ENCODE measurements at regions of chr1 and their contacts with region 1.

Region 1: DNA sequence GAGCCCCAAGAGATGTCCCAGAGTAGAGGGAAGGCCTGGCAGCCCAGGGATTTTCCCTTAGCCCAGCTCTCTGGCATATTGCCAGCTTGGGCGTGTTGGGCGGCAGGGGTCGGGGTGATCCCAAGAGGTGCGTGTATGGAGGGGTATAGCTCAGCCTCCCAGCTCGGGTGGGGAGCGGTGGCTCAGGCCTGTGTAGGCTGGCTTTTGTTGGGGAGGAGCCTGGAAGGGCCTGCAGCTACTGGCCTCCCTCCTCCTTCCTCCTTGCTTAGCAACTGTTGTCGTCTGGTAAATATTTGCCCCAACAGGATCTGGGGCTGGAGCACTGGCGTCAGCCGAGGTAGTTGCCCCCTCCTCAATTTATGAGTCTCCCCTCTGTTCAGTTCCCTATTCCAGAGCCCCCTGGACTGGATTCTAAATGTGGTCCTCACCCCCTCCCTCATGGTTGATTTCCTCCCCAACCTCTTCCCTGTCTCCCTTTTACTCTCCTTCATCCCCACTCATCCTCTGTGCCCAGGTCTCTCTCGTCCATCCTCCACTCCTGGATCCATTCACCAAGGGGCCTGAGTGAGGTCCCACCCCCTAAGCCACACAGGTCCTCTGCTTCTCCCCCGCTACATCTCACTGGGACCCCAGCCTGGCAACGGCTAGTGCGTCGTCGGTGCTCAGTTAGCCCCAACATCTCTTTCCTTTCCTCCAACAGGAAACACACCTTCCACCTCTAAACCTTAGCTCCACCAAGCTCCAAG is 10.3 kb upstream of the LMNA start:
- DNase-seq: peak; percentile 44
- ATAC-seq: peak; percentile 5
- H3K4me3 Mint-ChIP-seq: no peak overlapping the region
- H3K27ac Mint-ChIP-seq: peak overlapping the region; percentile 62
- H3K4me1 Mint-ChIP-seq: peaks cover 60% of the 10 kb centered on the region
- H3K27me3 Mint-ChIP-seq: no peaks in the 10 kb centered on the region
- CTCF ChIP-seq: no peak

Region 2: GRCh38 chr1:155829386-155829785 is 274.9 kb before region 1 on chr1:
- CTCF ChIA-PET with region 1: no interaction called
- POLR2A ChIA-PET with region 1: no interaction called
- DNase-seq: no peak
- ATAC-seq: no peak
- H3K4me3 Mint-ChIP-seq: no peak overlapping the region
- H3K27ac Mint-ChIP-seq: no peak overlapping the region
- H3K4me1 Mint-ChIP-seq: peaks cover 7% of the 10 kb centered on the region
- H3K27me3 Mint-ChIP-seq: no peaks in the 10 kb centered on the region
- CTCF ChIP-seq: no peak

Region 3: DNA sequence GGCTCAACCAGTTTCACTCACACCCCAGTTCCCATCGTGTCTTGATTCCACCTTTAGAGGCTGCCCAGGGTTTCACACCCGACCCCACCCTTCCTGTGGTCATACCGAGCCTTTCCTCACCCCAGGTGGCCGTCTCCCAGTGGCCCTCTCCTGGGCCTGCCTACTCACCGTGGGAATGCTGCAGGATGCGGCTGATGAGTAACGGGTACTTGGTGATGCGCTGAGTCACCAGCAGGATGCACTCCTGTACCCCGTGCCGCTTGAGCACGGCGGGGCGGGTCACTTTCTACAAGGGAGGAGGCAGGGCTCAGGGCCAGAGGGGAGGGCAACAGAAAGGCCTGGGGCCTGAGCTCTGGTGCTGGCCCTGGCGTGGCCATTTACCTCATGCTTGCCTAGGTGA is 142.3 kb before region 1 on chr1:
- CTCF ChIA-PET with region 1: no interaction called
- POLR2A ChIA-PET with region 1: no interaction called
- DNase-seq: no peak
- ATAC-seq: peak; percentile 63
- H3K4me3 Mint-ChIP-seq: no peak overlapping the region
- H3K27ac Mint-ChIP-seq: peak overlapping the region; percentile 82
- H3K4me1 Mint-ChIP-seq: peaks cover 6% of the 10 kb centered on the region
- H3K27me3 Mint-ChIP-seq: no peaks in the 10 kb centered on the region
- CTCF ChIP-seq: no peak

Region 4: GRCh38 chr1:156050416-156050815 is 53.8 kb before region 1 on chr1:
- CTCF ChIA-PET with region 1: no interaction called
- POLR2A ChIA-PET with region 1: no interaction called
- DNase-seq: no peak
- ATAC-seq: no peak
- H3K4me3 Mint-ChIP-seq: no peak overlapping the region
- H3K27ac Mint-ChIP-seq: no peak overlapping the region; the same call in 1 of the 2 replicates
- H3K4me1 Mint-ChIP-seq: peaks cover 8% of the 10 kb centered on the region
- H3K27me3 Mint-ChIP-seq: no peaks in the 10 kb centered on the region
- CTCF ChIP-seq: no peak

Region 5: DNA sequence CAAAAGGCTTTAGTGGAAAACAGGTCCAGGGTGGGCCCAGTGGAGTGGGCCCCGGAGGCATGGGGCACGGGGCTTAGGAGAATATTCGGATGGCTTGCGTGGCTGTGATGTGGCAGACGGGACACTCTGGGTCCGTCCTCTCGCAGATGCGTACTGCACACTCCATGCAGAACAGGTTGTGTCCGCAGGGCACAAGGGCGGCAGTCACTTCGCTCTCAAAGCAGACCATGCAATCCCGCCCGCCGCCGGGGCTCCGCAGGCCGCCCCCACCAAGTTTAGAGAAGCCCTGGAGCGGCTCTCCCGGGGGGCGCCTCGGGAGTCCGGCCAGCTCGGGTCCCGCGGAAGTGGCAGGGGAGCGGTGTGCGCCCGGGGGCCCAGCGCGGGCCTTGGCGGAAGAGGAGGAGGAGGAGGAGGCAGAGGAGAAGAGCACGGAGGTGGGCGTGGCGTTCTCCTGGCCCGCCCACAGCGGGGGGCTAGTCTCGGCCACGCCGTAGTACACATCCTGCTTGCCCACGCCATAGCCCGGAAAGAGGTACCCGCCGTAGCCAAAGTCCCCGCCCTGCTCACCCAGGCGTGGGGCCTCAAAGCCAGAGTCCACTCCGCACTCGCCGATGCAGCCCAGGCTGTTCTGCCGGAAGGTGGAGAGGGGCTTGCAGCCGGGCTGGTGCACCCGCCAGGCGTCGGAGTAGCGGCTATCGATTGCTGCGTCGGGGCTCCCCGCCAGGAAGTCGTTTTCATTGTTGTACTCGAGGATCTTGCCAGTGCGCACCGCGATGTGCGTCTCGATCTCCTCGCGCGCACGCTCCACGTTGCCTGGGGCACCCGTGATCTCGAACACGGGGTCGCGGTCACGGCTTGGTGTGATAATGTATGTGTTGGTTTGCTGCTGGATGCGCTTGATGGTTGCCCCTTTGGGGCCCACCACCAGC is 27.5 kb before region 1 on chr1:
- CTCF ChIA-PET with region 1: no interaction called
- POLR2A ChIA-PET with region 1: no interaction called
- DNase-seq: peak; percentile 65
- ATAC-seq: peak; percentile 21
- H3K4me3 Mint-ChIP-seq: peak overlapping the region; percentile 96
- H3K27ac Mint-ChIP-seq: peak overlapping the region; percentile 53
- H3K4me1 Mint-ChIP-seq: peaks cover 80% of the 10 kb centered on the region
- H3K27me3 Mint-ChIP-seq: no peaks in the 10 kb centered on the region
- CTCF ChIP-seq: no peak

Region 6: GRCh38 chr1:156090822-156091188 is 13.4 kb before region 1 on chr1:
- CTCF ChIA-PET with region 1: interaction called, 64 read pairs
- POLR2A ChIA-PET with region 1: interaction called, 7 read pairs
- DNase-seq: peak; percentile 96
- ATAC-seq: peak; percentile 92
- H3K4me3 Mint-ChIP-seq: no peak overlapping the region
- H3K27ac Mint-ChIP-seq: no peak overlapping the region
- H3K4me1 Mint-ChIP-seq: peaks cover 27% of the 10 kb centered on the region
- H3K27me3 Mint-ChIP-seq: no peaks in the 10 kb centered on the region
- CTCF ChIP-seq: peak; percentile 87

Region 7: GRCh38 chr1:156114101-156114916 is 10.1 kb after region 1 on chr1 and contains the start of gene LMNA:
- CTCF ChIA-PET with region 1: interaction called, 1,176 read pairs
- POLR2A ChIA-PET with region 1: interaction called, 12 read pairs
- DNase-seq: peak; percentile 80
- ATAC-seq: peak; percentile 91
- H3K4me3 Mint-ChIP-seq: peak within 1 kb of the TSS; percentile 93
- H3K27ac Mint-ChIP-seq: no peak within 1 kb of the TSS
- H3K4me1 Mint-ChIP-seq: peaks cover 34% of the 10 kb centered on the region
- H3K27me3 Mint-ChIP-seq: peaks cover 18% of the 10 kb centered on the region
- CTCF ChIP-seq: no peak
- total RNA-seq, gene LMNA: 40.7 to 68.8 TPM (median 46.2 TPM) in 3 replicates